ENCODE measurements at regions of chr15 and their contacts with region 1.

Region 1: DNA sequence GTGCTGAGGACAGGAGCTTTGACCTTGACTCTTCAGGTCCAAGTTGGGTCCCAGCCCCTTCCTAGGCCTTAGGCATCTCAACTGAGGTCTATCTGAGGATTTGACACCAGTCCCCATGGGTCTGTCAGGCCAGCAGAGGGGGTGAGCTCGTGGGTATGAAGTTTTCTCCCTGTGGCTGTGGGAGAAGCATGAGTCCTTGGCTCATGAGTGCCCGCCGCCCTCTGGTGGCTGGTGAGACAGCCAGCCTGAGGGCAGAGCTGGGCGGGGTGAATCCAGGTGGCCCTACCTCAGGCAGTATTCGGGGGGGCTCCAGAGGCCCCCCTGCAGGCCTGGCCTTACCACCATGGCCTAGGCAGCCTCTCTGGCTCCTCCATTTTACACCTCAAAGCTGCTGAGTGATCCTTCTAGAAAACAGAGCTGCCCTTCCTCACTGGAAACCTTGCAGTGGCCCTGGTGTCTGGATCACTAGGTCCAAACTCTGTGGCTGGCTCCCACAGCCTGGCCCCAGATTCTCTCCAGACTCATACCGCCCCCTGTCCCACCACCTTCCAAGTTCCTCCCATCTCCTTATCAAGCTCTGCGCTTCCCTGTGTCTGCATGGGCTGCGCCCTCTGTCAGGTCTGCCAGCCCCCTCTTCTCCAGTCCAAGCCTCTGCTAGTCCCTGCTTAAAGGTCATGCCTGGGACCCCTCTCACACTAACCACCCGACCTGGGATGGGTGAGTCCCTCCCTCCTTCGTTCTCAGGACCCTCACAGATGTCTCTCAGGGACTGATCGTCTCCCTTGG is 16.1 kb downstream of the SH2D7 start:
- DNase-seq: peak; percentile 94
- H3K4me3 Mint-ChIP-seq: no peak overlapping the region
- H3K27ac Mint-ChIP-seq: no peak overlapping the region
- H3K4me1 Mint-ChIP-seq: peaks cover 53% of the 10 kb centered on the region
- H3K27me3 Mint-ChIP-seq: no peaks in the 10 kb centered on the region

Region 2: GRCh38 chr15:77959432-77959879 is 149.0 kb before region 1 on chr15:
- intact Hi-C with region 1: loop called (anchors 2 kb)
- DNase-seq: peak; percentile 94
- H3K4me3 Mint-ChIP-seq: peak overlapping the region; percentile 24
- H3K27ac Mint-ChIP-seq: no peak overlapping the region
- H3K4me1 Mint-ChIP-seq: peaks cover 10% of the 10 kb centered on the region
- H3K27me3 Mint-ChIP-seq: peaks cover 37% of the 10 kb centered on the region

Region 3: DNA sequence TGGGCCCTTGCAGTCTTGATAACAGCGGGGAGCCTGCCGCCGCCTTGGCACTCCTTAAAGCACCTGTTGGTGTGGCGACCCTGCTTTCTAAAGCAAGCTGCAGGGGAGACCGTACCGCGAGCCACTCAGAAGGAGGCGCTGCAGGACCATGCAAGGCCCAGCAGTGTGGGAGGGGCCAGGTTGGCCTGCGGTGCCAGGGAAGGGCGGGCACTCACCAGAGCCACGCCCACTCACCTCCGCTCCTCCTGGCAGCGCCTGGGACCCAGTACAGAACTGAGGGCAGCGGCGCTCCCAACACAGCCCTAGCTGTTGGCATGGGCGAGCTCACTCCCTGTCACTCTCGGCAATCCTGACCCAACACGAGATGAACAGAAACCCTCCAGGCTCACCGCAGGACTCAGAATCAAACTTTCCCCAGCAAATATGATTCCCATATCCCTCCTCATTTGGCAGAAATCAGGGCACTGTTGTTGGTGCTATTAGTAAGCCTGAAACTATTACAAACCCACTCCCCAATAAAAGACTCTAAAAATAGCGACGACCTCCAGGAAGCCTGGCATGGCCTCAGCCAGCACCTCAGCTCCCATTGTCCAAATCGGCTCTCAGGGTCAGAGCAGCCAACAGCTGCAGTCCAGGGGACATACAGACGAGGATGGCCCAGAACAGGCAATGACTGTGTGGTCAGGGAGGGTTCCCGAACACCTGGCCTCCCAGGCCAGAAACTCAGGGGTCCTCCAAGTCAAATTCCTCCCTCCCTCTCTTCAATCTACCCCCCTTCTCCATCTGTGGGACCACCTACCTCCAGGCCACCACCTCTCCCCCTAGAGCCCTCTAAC is 108.2 kb before region 1 on chr15:
- intact Hi-C with region 1: loop called (anchors 1 kb)
- DNase-seq: peak; percentile 93
- H3K4me3 Mint-ChIP-seq: no peak overlapping the region
- H3K27ac Mint-ChIP-seq: no peak overlapping the region
- H3K4me1 Mint-ChIP-seq: peaks cover 16% of the 10 kb centered on the region
- H3K27me3 Mint-ChIP-seq: no peaks in the 10 kb centered on the region

Region 4: GRCh38 chr15:78049691-78050440 is 58.6 kb before region 1 on chr15:
- intact Hi-C with region 1: loop called (anchors 5 kb)
- DNase-seq: peak; percentile 89
- H3K4me3 Mint-ChIP-seq: peak overlapping the region; percentile 79
- H3K27ac Mint-ChIP-seq: peak overlapping the region; percentile 98
- H3K4me1 Mint-ChIP-seq: peaks cover 86% of the 10 kb centered on the region
- H3K27me3 Mint-ChIP-seq: no peaks in the 10 kb centered on the region

Region 5: GRCh38 chr15:78077058-78077877 is 31.2 kb before region 1 on chr15 and contains the start of gene TBC1D2B:
- intact Hi-C with region 1: loop called (anchors 2 kb)
- DNase-seq: peak; percentile 92
- H3K4me3 Mint-ChIP-seq: peak within 1 kb of the TSS; percentile 97
- H3K27ac Mint-ChIP-seq: peak within 1 kb of the TSS; percentile 90
- H3K4me1 Mint-ChIP-seq: peaks cover 45% of the 10 kb centered on the region
- H3K27me3 Mint-ChIP-seq: no peaks in the 10 kb centered on the region
- total RNA-seq, gene TBC1D2B: 56.8 and 62.3 TPM in 2 replicates

Region 6: DNA sequence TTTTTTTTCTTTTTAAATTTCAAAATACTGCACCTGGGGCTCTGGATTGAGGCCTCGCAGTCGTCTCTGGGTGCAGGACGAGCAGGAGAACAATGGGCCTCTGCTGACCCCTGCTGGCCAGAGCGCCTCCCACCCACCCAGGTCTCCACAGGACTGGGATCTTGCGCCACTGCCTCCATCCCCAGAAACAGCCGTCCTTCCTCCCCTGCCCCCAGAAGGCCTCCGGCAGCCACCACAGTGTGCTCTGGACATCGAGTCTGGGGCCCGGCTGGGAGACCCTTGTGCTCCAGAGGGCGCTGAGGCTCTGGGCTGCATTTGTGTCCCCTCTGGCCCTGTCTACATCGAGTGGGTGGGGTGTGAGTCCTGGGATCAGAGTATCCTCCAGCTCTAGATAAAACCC is 132.5 kb after region 1 on chr15:
- intact Hi-C with region 1: loop called (anchors 1 kb)
- DNase-seq: peak; percentile 94
- H3K4me3 Mint-ChIP-seq: no peak overlapping the region
- H3K27ac Mint-ChIP-seq: no peak overlapping the region
- H3K4me1 Mint-ChIP-seq: peaks cover 3% of the 10 kb centered on the region
- H3K27me3 Mint-ChIP-seq: peaks cover 5% of the 10 kb centered on the region

Region 7: GRCh38 chr15:78457101-78457500 is 348.6 kb after region 1 on chr15:
- intact Hi-C with region 1: no loop called
- DNase-seq: no peak
- H3K4me3 Mint-ChIP-seq: no peak overlapping the region
- H3K27ac Mint-ChIP-seq: no peak overlapping the region
- H3K4me1 Mint-ChIP-seq: peaks cover 53% of the 10 kb centered on the region
- H3K27me3 Mint-ChIP-seq: no peaks in the 10 kb centered on the region